Caco-2 (cell line): ENCODE measurements at regions of chr2 and their contacts with region 1.

Region 1: DNA sequence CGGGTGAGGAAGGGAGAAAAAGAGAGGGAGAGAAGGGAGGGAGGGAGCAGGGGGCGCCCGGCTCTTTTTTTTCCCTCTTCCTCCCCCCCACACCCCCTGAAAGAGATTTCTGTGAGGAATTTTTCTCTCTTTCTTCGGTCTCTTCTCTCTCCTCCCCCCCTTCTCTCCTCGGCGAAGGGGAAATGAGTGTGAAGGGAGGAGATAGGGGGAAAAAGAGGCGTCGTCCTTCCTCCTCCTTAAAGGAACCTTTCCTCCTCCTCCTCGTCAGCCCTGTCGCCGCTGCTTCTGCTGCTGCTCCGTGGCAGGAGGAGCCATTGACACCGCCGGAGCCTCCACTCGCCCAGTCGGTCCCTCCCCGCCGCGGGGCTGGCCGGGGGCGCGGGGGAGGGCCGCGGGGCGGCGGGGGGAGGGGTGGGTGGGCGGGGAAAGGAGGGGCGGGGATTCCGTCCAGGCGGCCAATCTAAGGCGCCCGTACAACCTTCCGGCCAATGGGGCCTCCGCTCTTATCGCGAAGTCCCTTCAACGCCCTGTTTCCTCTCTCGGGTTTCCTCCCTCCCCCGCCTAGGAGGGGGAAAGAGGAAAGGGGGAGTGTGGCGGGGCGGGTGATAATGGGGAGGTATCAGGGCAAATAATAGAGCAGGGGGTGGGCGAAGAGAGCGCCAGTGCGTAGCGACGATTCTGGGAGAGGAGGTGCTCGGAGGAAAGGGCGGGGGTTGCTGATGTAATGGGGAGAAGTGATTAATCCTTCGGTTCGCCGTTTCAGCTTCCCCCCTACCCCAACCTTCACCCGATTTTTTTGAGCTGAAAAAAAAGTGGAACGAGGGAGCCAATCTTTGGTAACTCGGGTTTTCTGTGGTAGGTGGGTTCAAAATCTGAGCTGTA is at the start of gene FBXO11:
- DNase-seq: peak; percentile 97 to 99
- H3K4me3 ChIP-seq: peak within 1 kb of the TSS; percentile 68
- H3K4me3 Mint-ChIP-seq: peak within 1 kb of the TSS; percentile 93
- H3K27ac Mint-ChIP-seq: peak within 1 kb of the TSS; percentile 95
- H3K4me1 ChIP-seq: peaks cover 6% of the 10 kb centered on the region
- H3K4me1 Mint-ChIP-seq: peaks cover 10% of the 10 kb centered on the region
- H3K27me3 ChIP-seq: no peaks in the 10 kb centered on the region
- H3K27me3 Mint-ChIP-seq: no peaks in the 10 kb centered on the region
- CTCF ChIP-seq: peak in 1 of 2 experiments; percentile 62
- total RNA-seq, gene FBXO11: 57.2 and 60.5 TPM in 2 replicates

Region 2: DNA sequence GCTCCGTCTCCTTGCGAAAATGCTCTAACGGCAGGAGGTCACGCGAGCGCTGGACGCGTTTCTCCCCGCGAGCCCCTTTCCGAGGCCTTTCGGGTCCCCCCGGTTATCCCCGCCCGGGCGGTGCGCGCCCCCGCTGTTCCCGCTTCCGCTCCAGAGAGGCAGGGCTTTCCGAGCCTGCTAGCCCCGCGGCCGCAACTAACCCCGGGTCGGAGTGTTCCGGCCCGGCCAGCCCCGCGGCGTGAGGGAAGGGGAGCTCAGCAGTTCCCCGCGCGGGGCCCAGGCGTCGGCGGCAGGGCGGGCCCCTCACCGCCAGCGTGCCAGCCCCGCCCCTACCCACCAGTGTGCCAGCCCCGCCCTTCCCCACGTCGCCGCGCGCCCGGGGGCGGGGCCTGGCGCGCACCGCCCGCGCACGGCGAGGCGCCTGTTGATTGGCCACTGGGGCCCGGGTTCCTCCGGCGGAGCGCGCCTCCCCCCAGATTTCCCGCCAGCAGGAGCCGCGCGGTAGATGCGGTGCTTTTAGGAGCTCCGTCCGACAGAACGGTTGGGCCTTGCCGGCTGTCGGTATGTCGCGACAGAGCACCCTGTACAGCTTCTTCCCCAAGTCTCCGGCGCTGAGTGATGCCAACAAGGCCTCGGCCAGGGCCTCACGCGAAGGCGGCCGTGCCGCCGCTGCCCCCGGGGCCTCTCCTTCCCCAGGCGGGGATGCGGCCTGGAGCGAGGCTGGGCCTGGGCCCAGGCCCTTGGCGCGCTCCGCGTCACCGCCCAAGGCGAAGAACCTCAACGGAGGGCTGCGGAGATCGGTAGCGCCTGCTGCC is 123.5 kb before region 1 on chr2 and contains the start of gene MSH6:
- CTCF ChIA-PET with region 1: no interaction called
- POLR2A ChIA-PET with region 1: no interaction called
- intact Hi-C with region 1: loop called (anchors 5 kb)
- DNase-seq: peak; percentile 88 to 94
- H3K4me3 ChIP-seq: peak within 1 kb of the TSS; percentile 75
- H3K4me3 Mint-ChIP-seq: peak within 1 kb of the TSS; percentile 98
- H3K27ac Mint-ChIP-seq: peak within 1 kb of the TSS; percentile 99
- H3K4me1 ChIP-seq: peaks cover 4% of the 10 kb centered on the region; the same call in 1 of the 2 replicates
- H3K4me1 Mint-ChIP-seq: peaks cover 7% of the 10 kb centered on the region
- H3K27me3 ChIP-seq: no peaks in the 10 kb centered on the region
- H3K27me3 Mint-ChIP-seq: no peaks in the 10 kb centered on the region
- CTCF ChIP-seq: no peak
- total RNA-seq, gene MSH6: 93.8 and 108 TPM in 2 replicates

Region 3: GRCh38 chr2:47862949-47863348 is 43.4 kb before region 1 on chr2:
- CTCF ChIA-PET with region 1: interaction called, 6 read pairs
- POLR2A ChIA-PET with region 1: no interaction called
- intact Hi-C with region 1: loop called (anchors 5 kb)
- DNase-seq: no peak
- H3K4me3 ChIP-seq: no peak overlapping the region
- H3K4me3 Mint-ChIP-seq: no peak overlapping the region
- H3K27ac Mint-ChIP-seq: no peak overlapping the region
- H3K4me1 ChIP-seq: no peaks in the 10 kb centered on the region
- H3K4me1 Mint-ChIP-seq: no peaks in the 10 kb centered on the region
- H3K27me3 ChIP-seq: no peaks in the 10 kb centered on the region
- H3K27me3 Mint-ChIP-seq: no peaks in the 10 kb centered on the region
- CTCF ChIP-seq: no peak

Region 4: DNA sequence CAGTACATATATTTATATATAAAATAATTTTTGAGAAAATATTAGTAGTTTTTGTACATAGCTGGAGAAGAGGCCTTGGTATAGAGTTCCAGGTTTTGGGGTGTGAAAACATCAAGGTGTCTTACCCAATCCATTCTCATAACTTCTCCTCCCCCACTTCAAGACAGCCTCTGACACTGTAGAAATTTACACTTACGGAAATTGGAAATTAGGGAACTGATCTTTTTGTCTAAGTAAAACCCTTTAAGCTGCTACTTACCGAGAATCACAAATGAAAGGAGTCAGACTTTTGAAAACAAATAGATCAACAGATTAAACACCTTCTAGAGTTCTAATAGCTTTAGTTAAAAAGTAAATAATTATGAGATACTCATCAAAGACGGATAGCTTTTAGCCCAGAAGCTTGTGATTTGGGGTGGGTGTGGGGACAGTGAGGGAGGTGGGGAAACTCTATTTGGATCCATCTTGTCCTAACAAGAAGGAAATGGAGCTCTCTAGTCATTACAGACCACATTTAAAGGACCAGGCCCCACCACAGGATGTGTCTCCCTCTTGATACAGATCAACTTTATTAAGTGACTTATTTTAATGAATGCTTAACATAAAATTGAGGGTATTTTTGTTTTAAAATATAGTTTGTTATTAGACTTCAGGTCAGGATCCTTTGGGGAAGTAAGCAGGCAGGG is 11.0 kb after region 1 on chr2:
- CTCF ChIA-PET with region 1: no interaction called
- POLR2A ChIA-PET with region 1: no interaction called
- intact Hi-C with region 1: no loop called
- DNase-seq: no peak
- H3K4me3 ChIP-seq: no peak overlapping the region
- H3K4me3 Mint-ChIP-seq: no peak overlapping the region
- H3K27ac Mint-ChIP-seq: no peak overlapping the region
- H3K4me1 ChIP-seq: no peaks in the 10 kb centered on the region
- H3K4me1 Mint-ChIP-seq: no peaks in the 10 kb centered on the region
- H3K27me3 ChIP-seq: no peaks in the 10 kb centered on the region
- H3K27me3 Mint-ChIP-seq: no peaks in the 10 kb centered on the region
- CTCF ChIP-seq: no peak

Region 5: DNA sequence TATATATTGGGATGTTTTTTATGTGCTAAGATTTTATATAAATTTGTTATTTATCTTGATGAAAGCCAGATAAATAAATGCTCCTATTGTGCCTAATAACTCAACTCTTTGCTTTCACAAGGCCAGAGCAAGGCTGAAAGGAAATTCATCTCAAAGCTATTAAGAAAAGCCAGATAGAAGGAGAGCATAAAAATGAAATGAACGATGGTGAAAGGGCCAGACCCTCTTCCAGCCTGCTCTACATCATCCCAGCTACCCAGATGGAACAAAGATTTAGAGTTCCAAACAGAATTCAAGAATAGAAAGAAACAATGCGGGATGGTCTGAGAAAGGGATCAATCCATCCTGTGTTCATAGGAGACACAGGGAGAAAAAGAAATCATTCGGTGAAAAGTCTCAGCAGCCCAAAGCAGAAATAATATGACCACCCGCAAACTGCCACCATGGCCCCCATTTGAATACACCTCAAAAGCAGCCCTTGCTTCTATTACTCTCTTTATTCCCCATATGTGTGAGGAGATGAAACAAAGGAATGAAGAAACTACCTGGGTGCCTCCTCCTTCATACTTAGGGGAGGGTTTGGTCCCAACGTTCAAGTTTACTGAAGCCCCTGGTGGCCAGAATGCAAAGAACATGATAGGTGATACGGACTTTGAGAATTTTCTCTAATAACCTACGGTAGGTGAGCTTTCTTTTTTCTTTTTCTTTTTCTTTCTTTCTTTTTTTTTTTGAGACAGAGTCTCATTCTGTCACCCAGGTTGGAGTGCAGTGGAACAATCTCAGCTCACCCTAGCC is 110.0 kb after region 1 on chr2:
- CTCF ChIA-PET with region 1: no interaction called
- POLR2A ChIA-PET with region 1: no interaction called
- intact Hi-C with region 1: loop called (anchors 2 kb)
- DNase-seq: peak in 1 of 2 experiments; percentile 49
- H3K4me3 ChIP-seq: no peak overlapping the region
- H3K4me3 Mint-ChIP-seq: no peak overlapping the region
- H3K27ac Mint-ChIP-seq: no peak overlapping the region
- H3K4me1 ChIP-seq: peaks cover 5% of the 10 kb centered on the region; the same call in 1 of the 2 replicates
- H3K4me1 Mint-ChIP-seq: peaks cover 7% of the 10 kb centered on the region
- H3K27me3 ChIP-seq: no peaks in the 10 kb centered on the region
- H3K27me3 Mint-ChIP-seq: peaks cover 14% of the 10 kb centered on the region
- CTCF ChIP-seq: peak; percentile 44 to 67

Region 6: DNA sequence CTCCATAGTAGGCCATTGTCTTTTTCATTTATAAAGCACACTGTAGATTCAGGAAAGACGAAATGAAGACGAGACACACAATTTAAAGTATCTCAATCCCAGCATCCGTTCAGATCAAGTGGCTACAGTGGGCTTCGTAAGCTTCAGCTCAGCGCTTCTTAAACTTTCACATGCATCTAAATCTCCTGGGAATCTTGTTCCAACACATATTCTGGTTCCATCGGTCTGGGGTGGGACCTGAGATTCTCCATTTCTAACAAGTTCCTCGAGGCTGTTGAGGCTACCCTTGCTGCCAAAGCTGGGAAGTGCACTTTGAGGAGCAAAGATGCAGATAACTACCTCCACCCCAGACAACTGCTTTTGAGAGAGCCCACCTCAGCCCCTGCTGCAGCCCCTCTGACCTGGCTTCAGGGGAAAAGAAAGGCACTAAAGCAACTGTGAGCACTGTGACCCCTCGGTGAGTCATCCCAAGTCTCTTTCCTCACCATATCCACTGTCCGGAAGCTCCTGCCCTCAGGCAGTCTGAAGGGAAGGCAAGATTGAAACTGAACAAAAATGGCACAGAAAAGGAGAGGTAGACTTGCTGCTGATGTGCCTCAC is 201.0 kb after region 1 on chr2:
- CTCF ChIA-PET with region 1: interaction called, 5 read pairs
- POLR2A ChIA-PET with region 1: no interaction called
- intact Hi-C with region 1: loop called (anchors 1 kb)
- DNase-seq: peak; percentile 23 to 54
- H3K4me3 ChIP-seq: no peak overlapping the region
- H3K4me3 Mint-ChIP-seq: peak overlapping the region; percentile 49
- H3K27ac Mint-ChIP-seq: no peak overlapping the region
- H3K4me1 ChIP-seq: peaks cover 42% of the 10 kb centered on the region
- H3K4me1 Mint-ChIP-seq: peaks cover 8% of the 10 kb centered on the region
- H3K27me3 ChIP-seq: no peaks in the 10 kb centered on the region
- H3K27me3 Mint-ChIP-seq: peaks cover 2% of the 10 kb centered on the region
- CTCF ChIP-seq: no peak

Region 7: DNA sequence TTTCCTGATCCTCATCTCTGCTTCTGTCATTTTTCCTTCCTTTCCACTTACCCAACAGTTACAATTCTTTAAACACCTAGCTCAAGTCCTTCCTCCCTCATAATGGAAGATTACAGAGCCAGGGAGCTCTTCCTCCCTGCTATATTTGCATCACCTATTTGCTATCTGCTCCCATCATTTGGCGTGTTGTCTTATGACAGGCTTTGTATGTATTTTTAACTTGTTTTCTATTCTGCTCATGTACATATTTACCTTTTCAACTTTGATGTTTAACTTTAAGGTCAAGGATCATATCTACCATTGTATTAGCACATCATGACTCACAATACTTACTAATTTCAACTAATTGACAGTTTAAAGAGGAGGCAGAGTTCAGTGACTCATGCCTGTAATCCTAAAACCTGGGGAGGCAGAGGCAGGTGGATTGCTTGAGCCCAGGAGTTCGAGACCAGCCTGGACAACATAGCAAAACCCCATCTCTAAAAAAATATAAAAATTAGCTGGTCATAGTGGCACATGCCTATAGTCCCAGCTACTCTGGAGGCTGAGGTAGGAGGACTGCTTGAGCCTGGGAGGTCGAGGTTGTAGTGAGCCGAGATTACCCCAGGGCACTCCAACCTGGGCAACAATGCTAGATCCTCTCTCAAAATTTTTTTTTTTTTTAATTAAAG is 315.6 kb after region 1 on chr2:
- CTCF ChIA-PET with region 1: no interaction called
- POLR2A ChIA-PET with region 1: no interaction called
- intact Hi-C with region 1: loop called (anchors 1 kb)
- DNase-seq: peak in 1 of 2 experiments; percentile 44
- H3K4me3 ChIP-seq: no peak overlapping the region
- H3K4me3 Mint-ChIP-seq: no peak overlapping the region
- H3K27ac Mint-ChIP-seq: no peak overlapping the region
- H3K4me1 ChIP-seq: peaks cover 32% of the 10 kb centered on the region
- H3K4me1 Mint-ChIP-seq: peaks cover 23% of the 10 kb centered on the region
- H3K27me3 ChIP-seq: no peaks in the 10 kb centered on the region
- H3K27me3 Mint-ChIP-seq: no peaks in the 10 kb centered on the region
- CTCF ChIP-seq: no peak

Region 8: DNA sequence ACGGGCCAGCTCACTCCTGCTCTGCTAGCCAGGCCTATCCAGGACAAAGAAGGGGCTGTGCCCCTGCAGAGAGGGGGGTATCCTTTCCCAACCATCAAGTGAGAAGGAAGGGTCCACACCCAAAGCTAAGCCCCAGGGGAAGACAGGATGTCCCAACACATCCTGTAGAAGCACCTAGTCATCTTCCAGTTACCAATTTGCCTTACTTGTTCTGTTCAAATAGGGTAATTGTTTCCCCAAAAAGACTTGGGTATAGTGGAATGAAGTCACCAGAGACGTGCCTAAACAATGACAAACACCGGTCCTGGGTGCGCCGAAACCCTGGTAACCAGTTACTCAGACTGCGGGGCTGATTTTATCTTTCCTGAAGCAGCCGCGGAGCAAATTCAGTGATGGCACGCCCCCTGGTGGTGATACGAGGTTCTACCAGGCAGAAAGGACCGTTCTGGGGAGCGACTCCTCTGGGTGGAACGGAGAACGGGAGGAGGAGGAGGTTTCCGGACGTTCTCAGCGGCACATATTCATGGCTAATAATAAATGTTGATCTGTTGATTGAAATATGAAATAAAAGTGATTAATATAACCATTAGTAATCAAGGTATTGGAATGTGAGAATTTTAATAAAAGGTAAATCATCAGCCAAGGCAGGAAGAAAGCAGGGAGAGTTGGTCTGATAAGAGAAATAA is 514.3 kb after region 1 on chr2:
- CTCF ChIA-PET with region 1: no interaction called
- POLR2A ChIA-PET with region 1: no interaction called
- intact Hi-C with region 1: loop called (anchors 5 kb)
- DNase-seq: peak; percentile 88 to 93
- H3K4me3 ChIP-seq: no peak overlapping the region
- H3K4me3 Mint-ChIP-seq: peak overlapping the region; percentile 56
- H3K27ac Mint-ChIP-seq: no peak overlapping the region
- H3K4me1 ChIP-seq: peaks cover 17% of the 10 kb centered on the region
- H3K4me1 Mint-ChIP-seq: peaks cover 27% of the 10 kb centered on the region
- H3K27me3 ChIP-seq: no peaks in the 10 kb centered on the region
- H3K27me3 Mint-ChIP-seq: no peaks in the 10 kb centered on the region
- CTCF ChIP-seq: peak; percentile 97 to 98